CD4-positive, alpha-beta T cell (primary cell): ENCODE measurements at regions of chr1 and their contacts with region 1.

Region 1: DNA sequence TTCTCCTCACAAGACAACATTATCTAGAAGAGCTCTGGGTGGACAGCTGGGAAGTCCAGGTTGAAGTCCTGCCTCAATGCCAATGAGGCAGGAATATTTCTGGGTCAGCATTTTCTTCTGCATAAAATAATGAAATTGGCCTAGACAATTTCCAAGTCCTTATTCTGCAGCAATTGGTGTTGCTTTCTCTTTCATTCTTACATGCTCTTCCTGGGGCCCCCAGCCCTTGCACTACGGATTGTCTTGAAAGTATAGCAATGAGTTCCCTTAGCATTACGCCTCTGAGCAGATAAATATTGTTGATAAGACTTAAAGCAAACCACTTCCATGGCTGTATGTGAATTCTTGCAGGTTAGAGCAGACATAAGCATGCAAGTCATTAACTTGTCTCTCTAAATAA is 188.5 kb downstream of the TGFBR3 start:
- DNase-seq: peak in 9 of 14 experiments; percentile 17 to 80 (median 33)
- ATAC-seq: peak; percentile 97
- H3K4me3 ChIP-seq: no peak overlapping the region
- H3K4me3 Mint-ChIP-seq: peak overlapping the region; percentile 43
- H3K27ac ChIP-seq: peak overlapping the region; percentile 1 to 54
- H3K27ac Mint-ChIP-seq: peak overlapping the region; percentile 64
- H3K4me1 ChIP-seq: peaks cover 8% of the 10 kb centered on the region
- H3K4me1 Mint-ChIP-seq: peaks cover 30% of the 10 kb centered on the region
- H3K27me3 ChIP-seq: no peaks in the 10 kb centered on the region
- H3K27me3 Mint-ChIP-seq: no peaks in the 10 kb centered on the region
- CTCF ChIP-seq: no peak

Region 2: GRCh38 chr1:91885716-91886506 is 188.5 kb after region 1 on chr1 and contains the start of gene TGFBR3:
- CTCF ChIA-PET with region 1: no interaction called
- POLR2A ChIA-PET with region 1: no interaction called
- intact Hi-C with region 1: loop called in 1 of 2 experiments (anchors 10 kb)
- DNase-seq: peak; percentile 44 to 87 (median 74)
- ATAC-seq: peak; percentile 71
- H3K4me3 ChIP-seq: peak within 1 kb of the TSS; percentile 72
- H3K4me3 Mint-ChIP-seq: peak within 1 kb of the TSS; percentile 96
- H3K27ac ChIP-seq: peak within 1 kb of the TSS in 1 of 2 donors; percentile 21
- H3K27ac Mint-ChIP-seq: peak within 1 kb of the TSS; percentile 77
- H3K4me1 ChIP-seq: peaks cover 30% of the 10 kb centered on the region
- H3K4me1 Mint-ChIP-seq: peaks cover 35% of the 10 kb centered on the region
- H3K27me3 ChIP-seq: no peaks in the 10 kb centered on the region
- H3K27me3 Mint-ChIP-seq: no peaks in the 10 kb centered on the region
- CTCF ChIP-seq: peak; percentile 35
- total RNA-seq, gene TGFBR3: 31.5 to 36.6 TPM

Region 3: GRCh38 chr1:92424381-92424780 is 727.0 kb after region 1 on chr1:
- CTCF ChIA-PET with region 1: no interaction called
- POLR2A ChIA-PET with region 1: no interaction called
- intact Hi-C with region 1: loop called in 1 of 2 experiments (anchors 5 kb)
- DNase-seq: no peak
- ATAC-seq: no peak
- H3K4me3 ChIP-seq: no peak overlapping the region
- H3K4me3 Mint-ChIP-seq: no peak overlapping the region
- H3K27ac ChIP-seq: no peak overlapping the region
- H3K27ac Mint-ChIP-seq: no peak overlapping the region
- H3K4me1 ChIP-seq: no peaks in the 10 kb centered on the region
- H3K4me1 Mint-ChIP-seq: no peaks in the 10 kb centered on the region
- H3K27me3 ChIP-seq: no peaks in the 10 kb centered on the region
- H3K27me3 Mint-ChIP-seq: no peaks in the 10 kb centered on the region
- CTCF ChIP-seq: no peak